ENCODE measurements at regions of chr18 and their contacts with region 1.

Region 1: DNA sequence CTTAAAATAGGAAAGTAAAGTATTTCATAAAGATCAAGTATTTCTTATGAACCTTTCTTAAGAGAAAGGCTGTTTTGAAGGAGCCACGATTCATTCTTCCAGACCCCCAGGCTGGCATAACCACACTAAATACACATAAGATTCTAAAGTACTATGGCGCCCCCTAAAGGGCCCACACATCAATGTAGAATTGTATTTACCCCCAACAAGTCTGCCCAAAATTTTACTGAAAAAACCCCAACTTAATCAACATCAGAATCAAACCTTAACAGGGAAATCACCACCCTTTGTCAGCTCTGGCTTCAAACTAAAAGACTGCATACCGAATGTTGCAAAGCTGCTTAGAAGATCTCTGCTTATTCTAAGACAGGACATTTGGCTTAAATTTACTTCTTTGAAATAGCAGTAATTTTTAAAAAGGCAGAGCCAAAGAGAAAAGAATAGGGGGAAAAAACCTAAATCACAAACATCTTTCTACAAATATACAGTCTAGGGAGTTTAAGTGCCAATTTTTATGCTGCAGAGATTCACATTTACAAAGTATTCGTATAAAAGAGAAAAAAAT is 20.4 kb upstream of the BCL2 start:
- DNase-seq: no peak
- H3K4me3 ChIP-seq: no peak overlapping the region
- H3K27me3 ChIP-seq: no peaks in the 10 kb centered on the region
- CTCF ChIP-seq: peak; percentile 60

Region 2: GRCh38 chr18:63350230-63350629 is 10.2 kb after region 1 on chr18:
- CTCF ChIA-PET with region 1: interaction called, 16 read pairs
- POLR2A ChIA-PET with region 1: no interaction called
- DNase-seq: no peak
- H3K4me3 ChIP-seq: no peak overlapping the region
- H3K27me3 ChIP-seq: no peaks in the 10 kb centered on the region
- CTCF ChIP-seq: no peak